Aorta (tissue), 5 donors: ENCODE measurements at regions of chr4 and their contacts with region 1.

Region 1: GRCh38 chr4:138190452-138190858 is 51.7 kb downstream of the SLC7A11 start:
- DNase-seq: no peak
- ATAC-seq: no peak
- H3K4me3 ChIP-seq: no peak overlapping the region
- H3K27ac ChIP-seq: no peak overlapping the region
- H3K4me1 ChIP-seq: no peaks in the 10 kb centered on the region
- H3K27me3 ChIP-seq: no peaks in the 10 kb centered on the region

Region 2: DNA sequence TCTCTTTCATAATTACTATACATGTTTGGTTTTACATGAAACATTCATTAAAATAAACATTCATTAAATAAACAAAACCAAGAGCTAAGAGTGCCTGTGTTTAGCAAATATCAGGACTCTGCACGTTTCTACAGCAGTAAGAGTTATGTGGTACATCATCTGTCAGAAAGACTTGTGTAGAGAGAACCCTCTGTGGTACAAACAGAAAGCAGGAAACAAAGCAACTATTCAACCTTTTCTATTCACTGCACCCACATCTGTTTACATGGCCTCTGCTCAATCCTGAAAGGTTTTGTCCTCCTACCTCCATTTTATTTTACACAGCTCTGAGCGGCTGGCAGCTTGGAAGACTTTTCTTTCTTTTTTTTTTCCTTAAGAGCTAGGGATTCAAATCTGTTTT is 567.4 kb before region 1 on chr4:
- intact Hi-C with region 1: no loop called
- DNase-seq: no peak
- ATAC-seq: no peak
- H3K4me3 ChIP-seq: no peak overlapping the region
- H3K27ac ChIP-seq: no peak overlapping the region
- H3K4me1 ChIP-seq: no peaks in the 10 kb centered on the region
- H3K27me3 ChIP-seq: no peaks in the 10 kb centered on the region

Region 3: GRCh38 chr4:138087066-138087719 is 103.3 kb before region 1 on chr4:
- intact Hi-C with region 1: no loop called
- DNase-seq: no peak
- ATAC-seq: no peak
- H3K4me3 ChIP-seq: no peak overlapping the region
- H3K27ac ChIP-seq: no peak overlapping the region
- H3K4me1 ChIP-seq: peaks cover 0 to 9% of the 10 kb centered on the region in 2 donors
- H3K27me3 ChIP-seq: no peaks in the 10 kb centered on the region

Region 4: DNA sequence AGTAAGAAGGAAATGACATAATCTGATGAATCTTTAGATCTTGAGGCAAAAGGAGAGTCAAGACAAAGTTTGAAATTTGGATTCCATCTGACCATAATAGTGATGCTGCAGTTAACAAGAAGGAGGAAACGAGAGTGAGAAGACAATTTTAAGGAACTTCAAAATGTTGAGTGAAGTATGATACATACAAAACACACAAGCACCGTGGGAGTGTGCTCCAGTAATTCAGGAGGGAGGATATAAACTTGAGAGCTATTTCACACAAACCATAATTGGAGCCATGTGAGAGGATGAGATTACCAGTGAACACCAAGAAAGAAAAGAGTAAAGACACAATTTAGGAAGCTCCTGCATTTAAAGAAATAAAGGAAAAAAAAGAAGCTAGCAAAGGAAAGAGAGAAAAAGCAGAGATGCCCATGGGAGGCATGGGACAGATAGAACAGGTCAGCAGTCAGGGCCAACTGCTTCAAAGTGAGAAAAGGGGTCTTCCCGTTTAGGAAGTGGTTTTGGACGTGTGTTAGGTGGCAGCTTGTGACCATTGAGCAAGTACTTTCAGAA is 202.4 kb after region 1 on chr4:
- intact Hi-C with region 1: no loop called
- DNase-seq: no peak
- ATAC-seq: no peak
- H3K4me3 ChIP-seq: no peak overlapping the region
- H3K27ac ChIP-seq: no peak overlapping the region
- H3K4me1 ChIP-seq: no peaks in the 10 kb centered on the region
- H3K27me3 ChIP-seq: no peaks in the 10 kb centered on the region

Region 5: DNA sequence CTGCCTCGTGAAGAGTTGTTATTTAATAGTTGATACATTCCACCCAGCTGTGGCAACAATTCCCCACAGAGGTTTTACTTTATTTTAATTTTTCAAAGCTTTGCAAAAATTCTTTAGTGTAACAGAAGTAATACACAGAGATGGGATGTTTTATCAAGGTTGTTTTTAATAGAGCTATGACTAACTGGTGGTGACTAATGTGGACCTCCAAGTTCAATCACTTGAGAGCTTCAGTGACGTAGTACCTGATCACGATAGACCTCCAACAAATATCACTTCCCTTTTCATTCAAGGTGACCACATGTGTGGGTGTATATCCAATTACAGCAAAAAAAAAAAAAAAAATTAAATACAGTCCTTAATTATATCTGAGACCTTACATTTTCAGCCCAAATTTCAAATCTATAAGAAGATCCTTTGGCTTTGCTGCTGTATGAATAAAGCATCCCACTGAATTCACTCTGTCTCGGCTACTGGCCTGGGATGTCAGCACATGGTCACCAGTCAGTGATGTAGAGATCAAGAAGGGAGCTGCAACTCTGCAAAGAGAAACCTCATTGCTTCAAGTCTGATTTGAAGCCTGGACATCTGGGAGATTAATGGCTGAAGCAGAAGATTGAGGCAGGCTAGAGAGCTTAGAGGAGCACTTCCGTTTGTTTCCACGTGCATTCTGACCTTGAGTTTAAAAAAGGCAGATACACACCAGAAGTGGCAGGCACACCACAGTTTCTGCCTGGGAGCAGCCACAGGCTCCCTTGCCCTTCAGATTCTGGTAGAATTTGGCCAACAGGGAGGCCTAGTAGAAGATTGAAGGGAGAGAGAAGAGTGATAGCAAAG is 479.2 kb after region 1 on chr4:
- intact Hi-C with region 1: loop called in 1 of 2 experiments (anchors 5 kb)
- DNase-seq: no peak
- ATAC-seq: no peak
- H3K4me3 ChIP-seq: no peak overlapping the region
- H3K27ac ChIP-seq: no peak overlapping the region
- H3K4me1 ChIP-seq: no peaks in the 10 kb centered on the region
- H3K27me3 ChIP-seq: no peaks in the 10 kb centered on the region

Region 6: GRCh38 chr4:138680989-138681604 is 490.6 kb after region 1 on chr4:
- intact Hi-C with region 1: loop called in 1 of 2 experiments (anchors 5 kb)
- DNase-seq: peak; percentile 84 to 90
- ATAC-seq: peak; percentile 89
- H3K4me3 ChIP-seq: no peak overlapping the region
- H3K27ac ChIP-seq: no peak overlapping the region
- H3K4me1 ChIP-seq: no peaks in the 10 kb centered on the region
- H3K27me3 ChIP-seq: no peaks in the 10 kb centered on the region